CD8-positive, alpha-beta T cell (primary cell): ENCODE measurements at regions of chr7 and their contacts with region 1.

Region 1: DNA sequence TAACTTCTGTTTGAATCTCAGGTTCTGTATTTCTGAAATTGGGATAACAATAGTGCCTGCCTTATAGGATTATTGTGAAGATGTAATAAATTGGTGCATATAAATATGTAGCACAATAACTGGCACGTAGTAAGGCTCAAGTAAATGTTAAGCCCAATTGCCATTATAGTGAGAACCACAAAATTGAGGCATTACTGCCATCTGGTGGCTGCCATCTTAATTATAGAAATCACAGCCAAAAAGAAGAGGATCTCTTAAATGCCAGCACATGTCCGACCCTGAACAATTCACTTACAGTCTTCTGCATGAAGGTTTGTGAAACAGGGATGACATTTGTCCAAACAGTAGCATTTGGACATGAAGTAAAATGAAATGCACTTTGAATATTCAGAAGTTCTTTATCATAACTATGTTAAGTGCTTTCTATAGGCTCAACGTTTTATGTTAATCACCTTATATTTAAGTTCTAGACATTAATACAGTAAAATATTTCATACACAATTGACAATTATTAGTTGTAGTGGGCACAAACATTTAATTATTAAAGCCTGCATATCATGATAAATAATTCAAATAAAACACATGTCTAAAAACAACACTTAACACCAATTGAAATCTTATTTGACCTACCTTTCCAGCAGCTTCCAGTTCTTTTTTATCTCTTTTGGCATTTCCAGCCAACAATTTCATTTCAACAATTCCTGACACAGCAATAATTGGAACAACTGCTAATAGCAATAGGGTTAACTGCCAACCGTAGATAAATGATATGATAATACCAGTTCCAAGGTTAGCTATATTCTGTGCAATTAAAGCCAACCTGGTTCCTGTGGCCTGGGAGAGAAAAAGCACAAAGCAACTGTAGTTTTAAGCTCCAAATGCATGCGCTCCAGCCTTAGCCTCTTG is 58.5 kb downstream of the ABCB4 start:
- DNase-seq: peak; percentile 38 to 79 (median 71)
- ATAC-seq: peak; percentile 68
- H3K4me3 ChIP-seq: no peak overlapping the region
- H3K4me3 Mint-ChIP-seq: no peak overlapping the region
- H3K27ac ChIP-seq: no peak overlapping the region
- H3K27ac Mint-ChIP-seq: no peak overlapping the region
- H3K4me1 ChIP-seq: no peaks in the 10 kb centered on the region
- H3K4me1 Mint-ChIP-seq: no peaks in the 10 kb centered on the region
- H3K27me3 ChIP-seq: no peaks in the 10 kb centered on the region
- H3K27me3 Mint-ChIP-seq: peaks cover 2% of the 10 kb centered on the region
- CTCF ChIP-seq: peak; percentile 80

Region 2: GRCh38 chr7:86926732-86927131 is 490.2 kb before region 1 on chr7:
- CTCF ChIA-PET with region 1: no interaction called
- POLR2A ChIA-PET with region 1: no interaction called
- intact Hi-C with region 1: loop called (anchors 5 kb)
- DNase-seq: peak in 4 of 9 experiments; percentile 35 to 67 (median 50)
- ATAC-seq: peak; percentile 85
- H3K4me3 ChIP-seq: no peak overlapping the region
- H3K4me3 Mint-ChIP-seq: no peak overlapping the region
- H3K27ac ChIP-seq: no peak overlapping the region
- H3K27ac Mint-ChIP-seq: no peak overlapping the region
- H3K4me1 ChIP-seq: no peaks in the 10 kb centered on the region
- H3K4me1 Mint-ChIP-seq: no peaks in the 10 kb centered on the region
- H3K27me3 ChIP-seq: no peaks in the 10 kb centered on the region
- H3K27me3 Mint-ChIP-seq: peaks cover 8% of the 10 kb centered on the region
- CTCF ChIP-seq: peak; percentile 91

Region 3: DNA sequence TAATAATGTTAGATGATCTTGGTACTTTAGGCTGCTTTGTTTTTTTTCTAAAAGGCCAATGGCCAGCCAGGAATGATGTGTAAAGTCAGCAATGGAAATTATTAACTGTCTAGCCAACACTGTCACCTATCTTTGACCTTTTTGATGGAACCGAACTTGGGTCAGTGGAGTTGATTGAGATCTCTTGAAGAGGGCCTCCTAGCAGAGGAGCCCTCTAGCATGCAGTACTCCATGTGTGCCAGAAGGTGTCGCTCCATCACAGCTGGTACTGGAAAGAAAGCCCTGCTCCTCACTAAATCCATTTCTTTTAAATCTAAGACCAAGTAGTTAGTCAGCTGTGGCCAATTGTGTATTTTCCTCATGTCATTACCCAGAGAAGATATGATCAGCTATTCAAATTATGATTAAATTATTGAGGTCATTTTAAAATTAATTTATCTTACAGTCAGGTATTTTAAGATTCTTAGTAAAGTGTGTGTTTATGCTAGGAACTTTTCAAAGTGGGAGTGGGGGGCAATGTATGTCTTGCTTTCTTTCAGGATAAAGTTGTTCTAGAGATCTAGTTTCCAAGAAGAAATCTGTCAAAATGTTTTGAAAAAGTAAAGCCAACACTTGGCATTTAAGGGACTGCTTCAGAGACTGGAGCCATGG is 104.6 kb before region 1 on chr7:
- CTCF ChIA-PET with region 1: interaction called, 386 read pairs
- POLR2A ChIA-PET with region 1: interaction called, 4 read pairs
- intact Hi-C with region 1: loop called (anchors 1 kb)
- DNase-seq: peak; percentile 19 to 76 (median 66)
- ATAC-seq: peak; percentile 98
- H3K4me3 ChIP-seq: no peak overlapping the region
- H3K4me3 Mint-ChIP-seq: no peak overlapping the region
- H3K27ac ChIP-seq: no peak overlapping the region
- H3K27ac Mint-ChIP-seq: no peak overlapping the region
- H3K4me1 ChIP-seq: no peaks in the 10 kb centered on the region
- H3K4me1 Mint-ChIP-seq: peaks cover 7% of the 10 kb centered on the region
- H3K27me3 ChIP-seq: no peaks in the 10 kb centered on the region
- H3K27me3 Mint-ChIP-seq: peaks cover 2% of the 10 kb centered on the region
- CTCF ChIP-seq: peak; percentile 97

Region 4: DNA sequence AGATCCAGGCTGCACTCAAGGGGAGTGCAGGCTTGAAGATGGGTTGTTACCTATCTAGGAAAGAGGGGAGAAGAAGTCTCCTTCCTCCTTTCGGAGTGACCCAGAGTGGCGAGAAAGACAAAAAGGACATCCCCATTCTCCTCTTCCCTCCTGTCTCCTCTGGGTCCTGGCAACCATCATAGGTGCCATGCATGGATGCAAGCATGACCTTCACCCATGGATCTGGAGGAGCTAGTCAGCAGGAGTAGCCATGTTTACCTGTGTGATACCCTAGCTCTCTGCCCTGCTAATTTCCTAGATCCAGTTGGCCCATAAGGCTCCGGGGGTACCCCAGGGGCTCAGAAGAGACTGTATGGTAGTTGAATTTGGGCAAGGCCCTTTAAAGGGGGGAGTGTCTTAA is 88.7 kb before region 1 on chr7:
- CTCF ChIA-PET with region 1: interaction called, 386 read pairs
- POLR2A ChIA-PET with region 1: no interaction called
- intact Hi-C with region 1: no loop called
- DNase-seq: peak in 1 of 9 experiments; percentile 21
- ATAC-seq: no peak
- H3K4me3 ChIP-seq: no peak overlapping the region
- H3K4me3 Mint-ChIP-seq: no peak overlapping the region
- H3K27ac ChIP-seq: no peak overlapping the region
- H3K27ac Mint-ChIP-seq: no peak overlapping the region
- H3K4me1 ChIP-seq: no peaks in the 10 kb centered on the region
- H3K4me1 Mint-ChIP-seq: no peaks in the 10 kb centered on the region
- H3K27me3 ChIP-seq: no peaks in the 10 kb centered on the region
- H3K27me3 Mint-ChIP-seq: no peaks in the 10 kb centered on the region
- CTCF ChIP-seq: no peak

Region 5: GRCh38 chr7:87404674-87405073 is 12.3 kb before region 1 on chr7:
- CTCF ChIA-PET with region 1: interaction called, 48 read pairs
- POLR2A ChIA-PET with region 1: no interaction called
- intact Hi-C with region 1: no loop called
- DNase-seq: no peak
- ATAC-seq: no peak
- H3K4me3 ChIP-seq: no peak overlapping the region
- H3K4me3 Mint-ChIP-seq: no peak overlapping the region
- H3K27ac ChIP-seq: no peak overlapping the region
- H3K27ac Mint-ChIP-seq: no peak overlapping the region
- H3K4me1 ChIP-seq: no peaks in the 10 kb centered on the region
- H3K4me1 Mint-ChIP-seq: no peaks in the 10 kb centered on the region
- H3K27me3 ChIP-seq: no peaks in the 10 kb centered on the region
- H3K27me3 Mint-ChIP-seq: no peaks in the 10 kb centered on the region
- CTCF ChIP-seq: no peak

Region 6: DNA sequence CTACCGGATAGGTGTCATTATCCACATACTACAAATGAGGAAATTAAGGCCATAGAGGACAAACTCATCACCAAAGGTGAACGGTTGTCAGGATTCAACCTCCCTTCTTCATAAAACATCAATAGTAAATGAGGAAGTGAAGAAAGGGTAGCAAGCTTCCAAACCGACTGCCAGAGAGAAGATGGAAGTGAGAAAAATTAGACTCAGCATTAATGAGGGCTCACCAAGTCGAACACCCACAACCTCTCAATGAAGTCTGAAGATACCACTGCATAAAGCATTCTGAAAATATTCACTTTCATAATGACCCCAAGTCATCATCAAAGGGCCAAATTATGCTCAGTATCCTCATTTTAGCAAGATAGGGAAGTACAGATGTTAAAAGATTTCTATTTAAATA is 29.0 kb after region 1 on chr7:
- CTCF ChIA-PET with region 1: interaction called, 13 read pairs
- POLR2A ChIA-PET with region 1: no interaction called
- intact Hi-C with region 1: no loop called
- DNase-seq: no peak
- ATAC-seq: no peak
- H3K4me3 ChIP-seq: no peak overlapping the region
- H3K4me3 Mint-ChIP-seq: no peak overlapping the region
- H3K27ac ChIP-seq: no peak overlapping the region
- H3K27ac Mint-ChIP-seq: no peak overlapping the region
- H3K4me1 ChIP-seq: no peaks in the 10 kb centered on the region
- H3K4me1 Mint-ChIP-seq: no peaks in the 10 kb centered on the region
- H3K27me3 ChIP-seq: no peaks in the 10 kb centered on the region
- H3K27me3 Mint-ChIP-seq: peaks cover 2% of the 10 kb centered on the region
- CTCF ChIP-seq: no peak

Region 7: GRCh38 chr7:87779806-87780205 is 362.9 kb after region 1 on chr7:
- CTCF ChIA-PET with region 1: no interaction called
- POLR2A ChIA-PET with region 1: no interaction called
- intact Hi-C with region 1: no loop called
- DNase-seq: no peak
- ATAC-seq: no peak
- H3K4me3 ChIP-seq: no peak overlapping the region
- H3K4me3 Mint-ChIP-seq: no peak overlapping the region
- H3K27ac ChIP-seq: no peak overlapping the region
- H3K27ac Mint-ChIP-seq: no peak overlapping the region
- H3K4me1 ChIP-seq: no peaks in the 10 kb centered on the region
- H3K4me1 Mint-ChIP-seq: no peaks in the 10 kb centered on the region
- H3K27me3 ChIP-seq: no peaks in the 10 kb centered on the region
- H3K27me3 Mint-ChIP-seq: peaks cover 2% of the 10 kb centered on the region
- CTCF ChIP-seq: no peak

Region 8: DNA sequence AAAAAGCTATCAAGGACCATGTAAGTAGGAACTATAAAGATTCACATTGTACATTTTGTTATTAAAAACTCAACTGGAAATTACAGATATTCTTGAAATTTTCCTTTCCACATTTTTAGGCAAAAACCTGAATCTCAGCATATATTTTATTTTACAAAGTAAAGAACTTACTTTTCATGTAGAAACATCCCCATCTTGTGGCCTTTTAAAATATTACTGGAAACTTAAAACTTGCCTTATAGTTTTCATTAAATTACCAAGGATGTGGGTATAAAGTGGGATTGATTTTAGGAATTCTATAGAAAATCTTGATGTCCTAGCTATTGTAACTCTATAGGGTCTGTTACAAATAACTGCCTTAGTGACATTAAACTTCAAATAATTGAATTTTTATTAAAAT is 469.9 kb after region 1 on chr7:
- CTCF ChIA-PET with region 1: no interaction called
- POLR2A ChIA-PET with region 1: no interaction called
- intact Hi-C with region 1: loop called in 1 of 2 experiments (anchors 5 kb)
- DNase-seq: peak in 2 of 9 experiments; percentile 50 to 63
- ATAC-seq: no peak
- H3K4me3 ChIP-seq: no peak overlapping the region
- H3K4me3 Mint-ChIP-seq: no peak overlapping the region
- H3K27ac ChIP-seq: no peak overlapping the region
- H3K27ac Mint-ChIP-seq: no peak overlapping the region
- H3K4me1 ChIP-seq: no peaks in the 10 kb centered on the region
- H3K4me1 Mint-ChIP-seq: peaks cover 9% of the 10 kb centered on the region
- H3K27me3 ChIP-seq: no peaks in the 10 kb centered on the region
- H3K27me3 Mint-ChIP-seq: no peaks in the 10 kb centered on the region
- CTCF ChIP-seq: peak; percentile 72